GM18951 (cell line): ENCODE measurements at regions of chr14 and their contacts with region 1.

Region 1: GRCh38 chr14:61252369-61253063 is 28.6 kb downstream of the TMEM30B start:
- POLR2A ChIP-seq: no peak

Region 2: GRCh38 chr14:60648934-60649874 is 603.3 kb before region 1 on chr14 and contains the start of gene SIX1:
- in situ Hi-C with region 1: loop called (anchors 25 kb)
- POLR2A ChIP-seq: no peak

Region 3: GRCh38 chr14:61342486-61342885 is 90.0 kb after region 1 on chr14:
- in situ Hi-C with region 1: no loop called
- POLR2A ChIP-seq: no peak

Region 4: DNA sequence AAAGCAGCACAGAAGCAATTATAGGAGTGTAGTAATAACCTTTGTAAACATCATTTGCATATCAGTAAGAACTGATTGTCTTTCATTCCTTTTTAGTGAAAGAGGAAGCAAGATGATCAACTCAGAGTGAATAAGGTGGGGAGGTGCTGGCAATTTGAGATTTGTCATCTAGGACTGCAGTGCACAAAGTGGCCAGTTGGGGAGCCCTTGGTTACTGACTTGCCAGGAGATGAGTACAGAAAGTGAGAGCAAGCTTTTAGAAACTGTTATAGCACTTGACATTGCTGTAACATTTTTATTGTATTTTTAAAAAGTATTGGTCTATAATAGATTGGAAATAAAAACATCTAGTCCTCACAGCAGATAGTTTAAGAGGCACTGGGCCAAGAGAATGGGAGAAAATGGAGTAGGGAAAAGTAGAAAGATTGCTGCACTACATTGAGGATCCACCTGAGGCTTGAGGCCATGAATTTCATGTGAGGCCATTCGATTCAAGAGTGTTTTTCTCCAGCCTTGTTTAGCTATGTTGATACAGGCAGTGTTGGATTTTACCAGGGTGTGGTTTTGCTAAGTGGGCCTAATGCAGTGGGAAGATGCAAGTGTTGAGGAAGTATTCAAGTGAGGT is 607.9 kb after region 1 on chr14:
- in situ Hi-C with region 1: no loop called
- POLR2A ChIP-seq: no peak